ENCODE measurements at regions of chr2 and their contacts with region 1.

Region 1: GRCh38 chr2:74587664-74588277 is 33.3 kb downstream of the DOK1 start:
- DNase-seq: peak; percentile 76
- H3K4me3 ChIP-seq: peak overlapping the region in 1 of 2 experiments; percentile 22; a peak in 1 of 4 replicates
- H3K27ac ChIP-seq: peak overlapping the region in 1 of 2 experiments; percentile 40; a peak in 1 of 4 replicates
- H3K4me1 ChIP-seq: peaks cover 4 to 13% of the 10 kb centered on the region in 2 experiments; a peak in 2 of 4 replicates
- H3K27me3 ChIP-seq: no peaks in the 10 kb centered on the region
- CTCF ChIP-seq: peak; percentile 85
- EP300 ChIP-seq: no peak
- RAD21 ChIP-seq: peak; percentile 97

Region 2: DNA sequence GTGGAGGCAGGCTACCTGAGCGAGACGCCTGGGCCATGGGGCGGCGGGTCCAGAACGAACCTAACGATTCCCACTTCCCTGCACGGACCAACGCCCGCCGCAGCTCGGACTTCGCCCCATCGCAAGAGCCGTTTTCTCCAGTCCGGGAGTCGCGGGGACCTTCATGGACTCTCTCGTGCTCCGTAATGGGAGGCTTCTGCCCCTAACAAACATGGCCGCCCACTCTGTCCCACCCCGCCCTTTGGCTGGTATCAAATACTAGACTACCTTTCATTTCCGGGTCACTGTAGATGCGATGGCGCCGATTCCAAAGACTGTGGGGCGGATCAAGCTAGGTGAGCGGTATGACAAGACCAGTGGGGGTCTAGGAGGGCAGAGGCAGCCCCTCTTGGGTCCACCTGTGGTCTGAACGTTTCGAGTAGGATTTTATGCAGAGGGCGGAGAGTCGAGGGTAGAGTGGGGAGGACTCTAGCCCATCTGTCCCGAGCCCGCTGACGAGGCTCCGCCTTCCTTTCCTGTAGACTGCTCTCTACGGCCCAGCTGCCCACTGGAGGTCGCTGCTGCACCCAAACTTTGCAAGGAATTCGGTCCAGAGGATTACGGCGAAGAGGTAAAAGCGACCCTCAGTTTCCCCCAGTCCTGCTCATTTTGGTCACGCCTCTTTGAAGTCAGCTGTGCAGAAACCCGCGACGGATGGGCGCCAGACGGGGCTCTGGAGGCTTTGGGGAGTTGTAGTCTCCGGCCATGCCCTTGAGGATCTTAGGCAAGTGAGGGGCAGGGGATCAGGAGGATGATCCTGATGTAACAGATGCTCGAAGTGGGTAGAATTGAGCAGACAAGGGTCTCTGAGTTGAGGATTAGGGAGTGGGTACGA is 104.7 kb before region 1 on chr2 and contains the starts of genes CCDC142 and TTC31:
- CTCF ChIA-PET with region 1: interaction called, 116 read pairs
- POLR2A ChIA-PET with region 1: interaction called, 11 read pairs
- DNase-seq: peak; percentile 93
- H3K4me3 ChIP-seq: peak within 1 kb of the TSS; percentile 70 to 97
- H3K27ac ChIP-seq: peak within 1 kb of the TSS; percentile 79 to 91
- H3K4me1 ChIP-seq: peaks cover 13 to 16% of the 10 kb centered on the region in 2 experiments; a peak in 3 of 4 replicates
- H3K27me3 ChIP-seq: no peaks in the 10 kb centered on the region
- CTCF ChIP-seq: peak; percentile 93
- EP300 ChIP-seq: no peak
- RAD21 ChIP-seq: peak; percentile 84
- polyA plus RNA-seq, gene CCDC142: 8.7 and 13.1 TPM in 2 replicates
- polyA plus RNA-seq, gene TTC31: 27.9 and 38.0 TPM in 2 replicates

Region 3: GRCh38 chr2:74507145-74507925 is 80.4 kb before region 1 on chr2 and contains the start of gene PCGF1:
- CTCF ChIA-PET with region 1: interaction called, 34 read pairs
- POLR2A ChIA-PET with region 1: no interaction called
- DNase-seq: peak; percentile 97
- H3K4me3 ChIP-seq: peak within 1 kb of the TSS; percentile 84 to 86
- H3K27ac ChIP-seq: peak within 1 kb of the TSS; percentile 99 to 100
- H3K4me1 ChIP-seq: peaks cover 19 to 26% of the 10 kb centered on the region in 2 experiments; a peak in 3 of 4 replicates
- H3K27me3 ChIP-seq: no peaks in the 10 kb centered on the region
- CTCF ChIP-seq: peak; percentile 53
- EP300 ChIP-seq: no peak
- RAD21 ChIP-seq: peak; percentile 57
- polyA plus RNA-seq, gene PCGF1: 44.9 and 46.4 TPM in 2 replicates

Region 4: DNA sequence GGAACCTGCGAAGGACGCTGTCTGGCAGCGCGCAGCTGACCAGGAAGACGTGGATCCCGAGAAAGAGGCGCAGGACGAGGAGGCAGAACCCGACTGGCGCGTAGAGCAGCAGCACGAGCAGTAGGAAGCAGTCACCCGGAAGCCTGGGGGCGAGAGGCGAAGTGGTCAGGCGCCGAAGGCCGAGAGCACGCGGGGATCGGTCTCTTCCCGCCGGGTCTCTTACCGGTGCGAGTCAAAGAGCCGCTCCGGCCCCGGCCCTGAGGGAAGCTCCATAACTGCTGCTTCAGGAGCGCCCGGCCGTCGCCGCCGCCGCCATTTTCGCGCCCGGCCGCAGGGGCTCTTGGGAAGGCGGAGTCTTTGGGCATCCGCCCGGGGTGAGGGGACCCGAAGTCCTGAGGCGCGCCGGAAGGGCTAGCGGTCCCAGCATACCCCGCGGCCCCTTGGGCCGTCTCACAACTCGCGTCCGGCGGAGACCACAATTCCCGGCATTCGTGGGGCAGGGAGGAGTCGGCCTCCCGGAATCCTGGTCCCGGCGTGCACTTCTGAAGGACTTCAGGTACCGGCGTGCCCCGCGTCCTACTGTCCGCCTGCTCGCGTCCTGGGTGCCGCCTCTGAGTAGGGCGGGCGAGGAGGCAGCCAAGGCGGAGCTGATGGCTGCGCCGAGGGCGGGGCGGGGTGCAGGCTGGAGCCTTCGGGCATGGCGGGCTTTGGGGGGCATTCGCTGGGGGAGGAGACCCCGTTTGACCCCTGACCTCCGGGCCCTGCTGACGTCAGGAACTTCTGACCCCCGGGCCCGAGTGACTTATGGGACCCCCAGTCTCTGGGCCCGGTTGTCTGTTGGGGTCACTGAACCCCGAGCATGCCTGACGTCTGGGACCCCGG is 58.2 kb before region 1 on chr2 and contains the starts of genes AUP1 and HTRA2:
- CTCF ChIA-PET with region 1: interaction called, 71 read pairs
- POLR2A ChIA-PET with region 1: interaction called, 3 read pairs
- DNase-seq: peak; percentile 98
- H3K4me3 ChIP-seq: peak within 1 kb of the TSS; percentile 83 to 99
- H3K27ac ChIP-seq: peak within 1 kb of the TSS; percentile 68 to 92
- H3K4me1 ChIP-seq: peaks cover 13 to 24% of the 10 kb centered on the region in 2 experiments
- H3K27me3 ChIP-seq: no peaks in the 10 kb centered on the region
- CTCF ChIP-seq: no peak
- EP300 ChIP-seq: no peak
- RAD21 ChIP-seq: 0 out of 2 replicates have a peak, but pooled peaks have one; percentile 4
- polyA plus RNA-seq, gene AUP1: 118 and 151 TPM in 2 replicates
- polyA plus RNA-seq, gene HTRA2: 55.7 and 60.4 TPM in 2 replicates

Region 5: DNA sequence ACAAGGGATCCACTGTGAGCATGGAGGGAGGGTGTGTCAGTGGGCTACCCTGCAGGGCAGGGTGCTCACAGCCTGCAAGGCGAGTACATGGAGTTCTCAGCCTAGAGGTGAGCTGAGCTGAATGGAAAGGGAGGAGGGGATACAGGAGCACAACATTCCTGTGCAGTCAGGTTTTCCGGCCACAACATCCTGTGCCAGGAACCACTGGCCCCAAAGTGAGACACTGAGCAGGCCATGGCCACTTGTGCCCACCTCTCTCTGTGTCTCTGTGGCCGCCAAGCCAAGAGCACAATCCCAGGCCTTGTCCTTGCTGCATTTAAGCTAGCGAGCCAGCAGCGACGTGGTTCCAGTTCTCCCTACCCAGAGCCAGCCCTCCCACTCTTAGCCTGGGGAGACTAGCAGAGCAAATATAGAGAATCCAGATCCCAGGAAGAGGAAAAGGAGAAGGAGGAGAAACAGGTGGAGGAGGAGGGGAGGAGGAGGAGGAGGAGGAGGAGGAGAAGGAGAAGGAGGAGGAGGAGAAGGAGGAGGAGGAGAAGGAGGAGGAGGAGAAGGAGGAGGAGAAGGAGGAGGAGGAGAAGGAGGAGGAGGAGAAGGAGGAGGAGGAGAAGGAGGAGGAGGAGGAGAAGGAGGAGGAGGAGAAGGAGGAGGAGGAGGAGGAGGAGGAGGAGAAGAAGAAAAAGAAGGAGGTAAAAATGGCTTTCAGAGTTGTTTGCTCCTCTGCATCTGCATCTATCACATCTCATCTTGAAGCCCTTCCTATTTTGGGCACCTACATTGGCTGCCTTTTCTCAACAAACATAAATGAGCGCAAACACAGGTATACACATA is 27.0 kb before region 1 on chr2:
- CTCF ChIA-PET with region 1: interaction called, 15 read pairs
- POLR2A ChIA-PET with region 1: no interaction called
- DNase-seq: no peak
- H3K4me3 ChIP-seq: no peak overlapping the region
- H3K27ac ChIP-seq: no peak overlapping the region
- H3K4me1 ChIP-seq: peaks cover 4 to 9% of the 10 kb centered on the region in 2 experiments; a peak in 2 of 4 replicates
- H3K27me3 ChIP-seq: no peaks in the 10 kb centered on the region
- CTCF ChIP-seq: no peak
- EP300 ChIP-seq: no peak
- RAD21 ChIP-seq: no peak

Region 6: DNA sequence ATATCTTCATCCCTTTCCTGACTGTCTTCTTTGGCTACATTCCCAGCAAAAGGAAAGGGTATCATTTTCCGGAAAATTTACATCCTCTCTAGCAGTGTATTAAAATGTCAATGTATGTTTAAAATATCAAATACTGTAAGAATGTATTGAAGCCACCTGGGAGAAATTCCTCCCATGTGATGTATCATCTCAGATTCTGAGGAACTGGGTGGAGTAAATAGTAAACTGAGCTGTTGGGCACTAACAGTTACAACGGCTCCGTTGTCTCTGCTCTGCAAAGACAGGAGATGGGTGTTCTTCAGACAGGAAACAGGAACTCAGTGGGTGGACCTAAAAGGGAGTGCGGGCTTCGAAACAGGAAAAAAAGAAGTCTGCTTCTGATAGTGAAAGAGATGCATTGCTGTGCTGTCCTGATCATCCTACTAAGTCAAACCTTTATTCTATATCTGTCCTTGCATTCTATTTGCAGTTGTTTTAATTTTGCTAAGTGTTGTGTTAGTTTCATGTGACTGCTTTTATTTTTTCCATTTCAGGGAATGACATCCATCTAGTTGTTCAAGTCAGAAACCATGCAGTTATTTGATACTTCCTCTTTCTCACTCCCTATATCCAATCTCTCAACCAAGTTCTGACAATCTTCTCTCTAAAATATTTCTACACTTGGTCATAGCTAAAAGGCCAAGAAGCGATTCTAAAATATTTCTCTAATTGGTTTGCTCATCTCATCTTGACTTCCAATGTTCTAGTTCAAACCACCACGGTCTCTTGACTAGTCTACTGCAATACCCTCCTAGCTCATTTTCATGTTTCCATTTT is 13.8 kb before region 1 on chr2:
- CTCF ChIA-PET with region 1: interaction called, 75 read pairs
- POLR2A ChIA-PET with region 1: no interaction called
- DNase-seq: no peak
- H3K4me3 ChIP-seq: peak overlapping the region; percentile 29 to 36; a peak in 2 of 4 replicates
- H3K27ac ChIP-seq: peak overlapping the region; percentile 68 to 82
- H3K4me1 ChIP-seq: peaks cover 7 to 21% of the 10 kb centered on the region in 2 experiments
- H3K27me3 ChIP-seq: no peaks in the 10 kb centered on the region
- CTCF ChIP-seq: no peak
- EP300 ChIP-seq: peak in 1 of 2 experiments; percentile 22; a peak in 1 of 4 replicates
- RAD21 ChIP-seq: no peak; the same call in 1 of the 2 replicates

Region 7: GRCh38 chr2:74762789-74763188 is 175.0 kb after region 1 on chr2:
- CTCF ChIA-PET with region 1: no interaction called
- POLR2A ChIA-PET with region 1: no interaction called
- DNase-seq: no peak
- H3K4me3 ChIP-seq: no peak overlapping the region
- H3K27ac ChIP-seq: no peak overlapping the region
- H3K4me1 ChIP-seq: peaks cover 0 to 9% of the 10 kb centered on the region in 2 experiments; a peak in 2 of 4 replicates
- H3K27me3 ChIP-seq: no peaks in the 10 kb centered on the region
- CTCF ChIP-seq: peak; percentile 14
- EP300 ChIP-seq: no peak
- RAD21 ChIP-seq: peak; percentile 58

Region 8: GRCh38 chr2:75098856-75099255 is 511.1 kb after region 1 on chr2:
- CTCF ChIA-PET with region 1: no interaction called
- POLR2A ChIA-PET with region 1: no interaction called
- DNase-seq: peak; percentile 14
- H3K4me3 ChIP-seq: no peak overlapping the region
- H3K27ac ChIP-seq: no peak overlapping the region
- H3K4me1 ChIP-seq: peaks cover 8% of the 10 kb centered on the region in 2 experiments; a peak in 3 of 4 replicates
- H3K27me3 ChIP-seq: peaks cover 7% of the 10 kb centered on the region
- CTCF ChIP-seq: peak; percentile 63
- EP300 ChIP-seq: no peak
- RAD21 ChIP-seq: peak; percentile 56

Measured in SK-N-SH (cell line).